ENCODE measurements at regions of chr4 and their contacts with region 1.

Region 1: DNA sequence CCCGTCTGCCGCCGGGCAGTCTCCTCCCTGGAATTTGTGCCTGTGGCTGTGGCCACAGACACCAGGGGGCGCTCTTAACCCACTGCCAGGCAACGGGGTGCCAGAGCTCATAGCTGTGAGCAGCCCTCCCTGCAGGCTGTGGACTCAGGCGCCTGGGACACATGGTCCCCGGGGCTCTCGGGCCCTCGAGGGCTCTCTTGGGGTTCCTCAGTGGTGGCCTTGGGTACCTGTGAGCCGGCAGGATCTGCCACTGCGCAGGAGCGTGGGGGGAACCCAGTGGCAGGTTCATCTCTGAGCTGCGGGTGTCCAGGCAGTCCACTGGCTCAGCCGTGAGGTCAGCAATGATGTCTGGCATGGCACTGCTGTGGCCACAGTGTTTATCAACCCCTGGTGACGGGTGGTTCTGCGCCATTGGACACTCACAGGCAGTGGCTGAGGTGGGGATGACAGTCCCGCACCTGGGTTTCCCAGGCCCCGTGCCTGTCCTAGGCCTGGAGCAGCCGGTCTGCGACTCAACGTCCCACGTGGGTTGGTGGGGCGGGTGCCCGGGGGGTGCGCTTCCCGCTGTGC is 37.2 kb downstream of the PCGF3 start:
- DNase-seq: peak; percentile 56 to 76
- ATAC-seq: peak; percentile 68 to 89 (median 88)
- H3K4me3 ChIP-seq: no peak overlapping the region
- H3K27ac ChIP-seq: no peak overlapping the region
- H3K4me1 ChIP-seq: no peaks in the 10 kb centered on the region
- H3K27me3 ChIP-seq: no peaks in the 10 kb centered on the region
- CTCF ChIP-seq: peak; percentile 85 to 96 (median 89)

Region 2: DNA sequence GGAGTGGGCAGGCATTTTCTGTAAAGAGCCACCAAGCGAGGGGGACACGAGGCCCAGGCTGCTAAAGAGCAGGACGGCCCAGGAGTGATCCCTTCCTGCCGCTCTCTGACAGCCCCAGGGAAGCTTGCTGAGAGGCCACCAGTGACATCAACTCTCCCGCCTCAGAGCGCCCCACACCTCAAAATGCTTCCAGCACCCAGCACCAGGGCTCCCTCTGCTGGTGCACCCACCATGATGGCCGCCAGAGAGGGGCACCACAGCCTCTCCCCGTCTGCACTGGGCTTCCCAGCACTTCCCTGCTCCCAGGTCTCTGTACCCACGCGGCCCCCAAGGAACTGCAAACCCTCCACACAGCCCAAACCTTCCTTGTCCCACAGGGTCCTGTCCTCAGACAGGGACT is 148.9 kb after region 1 on chr4:
- intact Hi-C with region 1: loop called in 1 of 10 experiments (anchors 10 kb)
- DNase-seq: no peak
- ATAC-seq: no peak
- H3K4me3 ChIP-seq: no peak overlapping the region
- H3K27ac ChIP-seq: no peak overlapping the region
- H3K4me1 ChIP-seq: no peaks in the 10 kb centered on the region
- H3K27me3 ChIP-seq: no peaks in the 10 kb centered on the region
- CTCF ChIP-seq: peak in 3 of 9 donors; percentile 18 to 29 (median 28)

Region 3: GRCh38 chr4:951594-952468 is 209.0 kb after region 1 on chr4:
- intact Hi-C with region 1: loop called in 1 of 10 experiments (anchors 10 kb)
- DNase-seq: peak in 1 of 2 donors; percentile 10
- ATAC-seq: no peak
- H3K4me3 ChIP-seq: no peak overlapping the region
- H3K27ac ChIP-seq: no peak overlapping the region
- H3K4me1 ChIP-seq: peaks cover 0 to 6% (median 0%) of the 10 kb centered on the region in 9 donors
- H3K27me3 ChIP-seq: no peaks in the 10 kb centered on the region
- CTCF ChIP-seq: no peak

Region 4: GRCh38 chr4:997375-998071 is 254.7 kb after region 1 on chr4:
- intact Hi-C with region 1: loop called in 1 of 10 experiments (anchors 5 kb)
- DNase-seq: no peak
- ATAC-seq: peak in 3 of 8 donors; percentile 19 to 47 (median 35)
- H3K4me3 ChIP-seq: peak overlapping the region in 8 of 10 donors; percentile 14 to 48 (median 44)
- H3K27ac ChIP-seq: no peak overlapping the region
- H3K4me1 ChIP-seq: peaks cover 5 to 25% (median 12%) of the 10 kb centered on the region in 9 donors
- H3K27me3 ChIP-seq: peaks cover 32 to 67% (median 58%) of the 10 kb centered on the region in 7 donors
- CTCF ChIP-seq: no peak

Measured in heart right ventricle (tissue), 16 donors.